ENCODE measurements at regions of chr10 and their contacts with region 1.

Region 1: GRCh38 chr10:113019692-113020424 is 69.8 kb downstream of the TCF7L2 start:
- DNase-seq: peak; percentile 74 to 78
- H3K4me3 ChIP-seq: 0 out of 2 replicates have a peak overlapping the region, but pooled peaks have one; percentile 5
- H3K4me3 Mint-ChIP-seq: peak overlapping the region; percentile 50
- H3K27ac Mint-ChIP-seq: peak overlapping the region; percentile 81
- H3K4me1 ChIP-seq: peaks cover 33% of the 10 kb centered on the region
- H3K4me1 Mint-ChIP-seq: peaks cover 34% of the 10 kb centered on the region
- H3K27me3 ChIP-seq: no peaks in the 10 kb centered on the region
- H3K27me3 Mint-ChIP-seq: no peaks in the 10 kb centered on the region
- CTCF ChIP-seq: no peak

Region 2: DNA sequence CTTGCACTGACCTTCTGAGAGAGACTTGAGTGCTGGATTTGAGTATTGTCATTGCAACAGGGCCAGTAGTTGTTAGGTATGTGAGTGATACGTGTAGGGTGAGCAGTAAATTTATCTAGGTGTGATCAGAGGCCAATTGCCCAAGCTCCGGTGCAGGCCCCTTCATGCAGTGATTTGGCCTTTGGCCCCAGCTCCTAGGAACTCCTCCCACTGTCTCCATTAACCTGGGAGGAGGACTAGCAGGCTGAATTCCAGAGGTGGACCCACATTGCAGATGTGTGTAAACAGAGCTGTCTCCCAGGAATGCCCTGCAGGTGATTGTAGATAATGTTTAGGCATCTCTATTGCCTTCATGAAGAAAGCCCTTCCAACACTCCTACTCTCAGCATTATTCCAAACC is 50.3 kb before region 1 on chr10:
- CTCF ChIA-PET with region 1: no interaction called
- POLR2A ChIA-PET with region 1: no interaction called
- intact Hi-C with region 1: loop called (anchors 2 kb)
- DNase-seq: peak; percentile 82 to 92
- H3K4me3 ChIP-seq: no peak overlapping the region
- H3K4me3 Mint-ChIP-seq: no peak overlapping the region
- H3K27ac Mint-ChIP-seq: peak overlapping the region; percentile 45
- H3K4me1 ChIP-seq: peaks cover 36% of the 10 kb centered on the region
- H3K4me1 Mint-ChIP-seq: peaks cover 45% of the 10 kb centered on the region
- H3K27me3 ChIP-seq: no peaks in the 10 kb centered on the region
- H3K27me3 Mint-ChIP-seq: no peaks in the 10 kb centered on the region
- CTCF ChIP-seq: no peak

Region 3: DNA sequence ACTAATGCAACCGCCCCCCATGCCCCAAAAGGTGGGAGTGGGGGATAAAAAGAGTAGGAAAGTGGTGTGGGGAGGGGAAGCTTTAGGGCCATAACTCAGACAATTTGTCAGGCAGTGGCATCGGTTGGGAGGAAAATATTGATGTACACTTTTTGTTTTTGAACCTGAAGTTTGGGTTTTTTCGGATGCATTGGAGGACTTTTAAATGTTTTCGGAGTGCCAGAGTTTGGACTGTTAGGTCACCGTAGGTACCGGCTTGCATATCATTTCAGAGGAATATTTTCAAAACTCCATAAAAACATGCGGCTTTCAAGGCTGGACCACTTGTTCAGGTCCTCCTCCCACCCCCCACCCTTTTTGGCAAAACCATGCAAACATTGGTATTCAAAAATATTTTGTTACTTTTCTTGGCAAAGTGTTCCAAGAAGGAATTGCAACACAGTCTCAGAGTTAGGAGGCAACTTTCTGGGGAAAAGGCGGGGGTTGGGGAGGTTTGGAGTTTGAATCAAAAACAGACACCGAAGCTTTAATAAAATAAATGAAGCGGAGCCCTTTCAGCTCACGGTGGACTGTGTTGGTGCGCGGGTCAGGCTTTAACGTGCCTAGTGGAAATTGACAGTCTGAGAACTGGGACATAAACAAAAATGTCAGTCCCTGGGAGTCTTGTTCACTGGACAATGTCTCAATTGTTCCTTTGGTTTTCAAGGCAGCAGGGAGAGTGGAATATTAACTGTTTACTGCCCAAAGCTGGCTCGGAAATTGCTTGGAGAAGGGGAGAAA is 39.3 kb after region 1 on chr10:
- CTCF ChIA-PET with region 1: no interaction called
- POLR2A ChIA-PET with region 1: no interaction called
- intact Hi-C with region 1: loop called (anchors 2 kb)
- DNase-seq: no peak
- H3K4me3 ChIP-seq: no peak overlapping the region
- H3K4me3 Mint-ChIP-seq: no peak overlapping the region
- H3K27ac Mint-ChIP-seq: no peak overlapping the region
- H3K4me1 ChIP-seq: peaks cover 38% of the 10 kb centered on the region
- H3K4me1 Mint-ChIP-seq: peaks cover 25% of the 10 kb centered on the region
- H3K27me3 ChIP-seq: no peaks in the 10 kb centered on the region
- H3K27me3 Mint-ChIP-seq: no peaks in the 10 kb centered on the region
- CTCF ChIP-seq: no peak

Region 4: GRCh38 chr10:113073549-113074189 is 53.8 kb after region 1 on chr10:
- CTCF ChIA-PET with region 1: no interaction called
- POLR2A ChIA-PET with region 1: interaction called, 7 read pairs
- intact Hi-C with region 1: loop called (anchors 1 kb)
- DNase-seq: peak; percentile 91 to 96
- H3K4me3 ChIP-seq: peak overlapping the region; percentile 16
- H3K4me3 Mint-ChIP-seq: peak overlapping the region; percentile 65
- H3K27ac Mint-ChIP-seq: peak overlapping the region; percentile 97
- H3K4me1 ChIP-seq: peaks cover 27% of the 10 kb centered on the region
- H3K4me1 Mint-ChIP-seq: peaks cover 13% of the 10 kb centered on the region
- H3K27me3 ChIP-seq: no peaks in the 10 kb centered on the region
- H3K27me3 Mint-ChIP-seq: no peaks in the 10 kb centered on the region
- CTCF ChIP-seq: no peak

Region 5: GRCh38 chr10:113087165-113088029 is 67.5 kb after region 1 on chr10:
- CTCF ChIA-PET with region 1: no interaction called
- POLR2A ChIA-PET with region 1: no interaction called
- intact Hi-C with region 1: loop called (anchors 2 kb)
- DNase-seq: peak; percentile 81 to 87
- H3K4me3 ChIP-seq: no peak overlapping the region
- H3K4me3 Mint-ChIP-seq: peak overlapping the region; percentile 28
- H3K27ac Mint-ChIP-seq: peak overlapping the region; percentile 81
- H3K4me1 ChIP-seq: peaks cover 31% of the 10 kb centered on the region
- H3K4me1 Mint-ChIP-seq: peaks cover 33% of the 10 kb centered on the region
- H3K27me3 ChIP-seq: no peaks in the 10 kb centered on the region
- H3K27me3 Mint-ChIP-seq: no peaks in the 10 kb centered on the region
- CTCF ChIP-seq: no peak

Region 6: DNA sequence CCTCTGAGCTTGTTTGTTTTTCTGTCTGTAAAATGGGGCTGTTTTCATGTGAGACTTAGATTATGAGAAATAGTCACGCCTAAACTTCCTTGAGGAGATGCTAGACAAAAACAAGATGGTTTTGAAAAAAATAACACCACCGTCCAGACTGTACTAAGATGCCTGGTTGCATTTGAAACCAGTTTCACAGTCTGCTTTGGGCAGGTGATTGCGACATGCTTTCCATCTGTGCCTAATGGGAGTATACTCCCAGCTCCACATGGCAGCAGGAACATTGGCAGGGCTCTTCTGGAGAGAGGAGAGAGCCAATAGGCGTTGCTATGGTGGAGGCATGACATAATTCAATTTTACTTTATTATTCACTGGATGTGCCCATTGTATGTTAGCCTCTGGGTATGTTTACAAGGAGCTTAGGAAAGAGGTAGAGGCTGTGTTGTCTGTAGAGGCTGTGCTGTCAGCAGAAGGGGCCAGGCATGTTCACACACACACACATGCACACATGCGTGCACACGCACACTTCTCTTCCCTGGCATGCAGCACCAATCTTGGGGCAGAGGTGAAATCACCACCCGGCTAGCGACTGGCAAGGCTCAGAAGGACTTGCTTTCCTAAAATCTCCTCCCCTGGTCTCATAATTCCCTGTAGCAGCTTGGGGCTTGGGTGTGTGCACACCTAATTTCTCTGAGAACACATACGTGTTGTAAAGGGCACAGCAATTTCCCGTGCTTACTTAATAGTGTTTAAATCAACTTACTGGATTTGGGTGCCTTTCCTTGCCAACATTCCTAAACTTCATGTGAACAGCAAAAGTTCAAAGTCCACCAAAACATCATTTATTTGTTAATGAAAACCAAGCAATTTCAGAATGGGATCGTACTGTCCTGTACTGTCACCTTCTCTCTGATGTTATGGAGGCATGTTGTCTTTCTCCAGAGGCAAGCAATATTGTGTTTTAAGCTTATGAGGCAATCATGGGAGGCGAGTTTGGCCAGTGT is 92.3 kb after region 1 on chr10:
- CTCF ChIA-PET with region 1: no interaction called
- POLR2A ChIA-PET with region 1: no interaction called
- intact Hi-C with region 1: no loop called
- DNase-seq: no peak
- H3K4me3 ChIP-seq: no peak overlapping the region
- H3K4me3 Mint-ChIP-seq: no peak overlapping the region
- H3K27ac Mint-ChIP-seq: no peak overlapping the region
- H3K4me1 ChIP-seq: peaks cover 6% of the 10 kb centered on the region; the same call in 1 of the 2 replicates
- H3K4me1 Mint-ChIP-seq: peaks cover 2% of the 10 kb centered on the region
- H3K27me3 ChIP-seq: no peaks in the 10 kb centered on the region
- H3K27me3 Mint-ChIP-seq: no peaks in the 10 kb centered on the region
- CTCF ChIP-seq: no peak

Measured in Caco-2 (cell line).